OCI-LY7 (cell line): ENCODE measurements at regions of chr20 and their contacts with region 1.

Region 1: DNA sequence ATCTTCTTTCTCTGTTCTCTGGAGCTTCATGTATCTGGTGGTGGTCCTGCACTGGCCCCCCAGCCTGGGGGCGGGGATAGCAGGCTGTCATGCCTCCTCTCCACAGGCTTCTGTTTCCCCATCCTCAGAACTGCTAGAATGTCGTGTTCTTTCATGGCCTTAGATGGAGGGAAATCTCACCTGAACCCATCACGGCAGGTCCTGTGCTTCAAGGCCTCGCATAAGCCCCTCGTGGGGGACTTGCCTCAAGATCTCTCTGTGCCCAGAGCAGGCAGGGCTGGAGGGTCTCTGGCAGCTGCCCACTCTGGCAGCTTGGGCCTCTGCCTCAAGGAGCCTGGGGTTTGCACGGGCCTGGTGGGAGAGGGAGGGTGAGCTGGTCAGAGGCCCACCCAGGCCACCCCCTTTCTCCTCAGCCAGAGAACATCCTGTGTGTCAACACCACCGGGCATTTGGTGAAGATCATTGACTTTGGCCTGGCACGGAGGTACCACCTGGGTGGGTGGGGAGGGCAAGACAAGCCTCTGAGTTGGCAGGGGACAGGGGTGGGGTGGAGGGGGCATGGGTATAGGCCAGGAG is 11.3 kb downstream of the MYLK2 start:
- DNase-seq: no peak
- H3K4me3 ChIP-seq: no peak overlapping the region
- H3K27ac ChIP-seq: no peak overlapping the region
- H3K4me1 ChIP-seq: peaks cover 8% of the 10 kb centered on the region
- CTCF ChIP-seq: no peak

Region 2: GRCh38 chr20:32067234-32067821 is 236.8 kb after region 1 on chr20:
- CTCF ChIA-PET with region 1: no interaction called
- POLR2A ChIA-PET with region 1: interaction called, 11 read pairs
- intact Hi-C with region 1: no loop called
- DNase-seq: peak; percentile 11
- H3K4me3 ChIP-seq: no peak overlapping the region
- H3K27ac ChIP-seq: no peak overlapping the region
- H3K4me1 ChIP-seq: peaks cover 14% of the 10 kb centered on the region
- CTCF ChIP-seq: no peak